GM10248 (cell line): ENCODE measurements at regions of chr1 and their contacts with region 1.

Region 1: DNA sequence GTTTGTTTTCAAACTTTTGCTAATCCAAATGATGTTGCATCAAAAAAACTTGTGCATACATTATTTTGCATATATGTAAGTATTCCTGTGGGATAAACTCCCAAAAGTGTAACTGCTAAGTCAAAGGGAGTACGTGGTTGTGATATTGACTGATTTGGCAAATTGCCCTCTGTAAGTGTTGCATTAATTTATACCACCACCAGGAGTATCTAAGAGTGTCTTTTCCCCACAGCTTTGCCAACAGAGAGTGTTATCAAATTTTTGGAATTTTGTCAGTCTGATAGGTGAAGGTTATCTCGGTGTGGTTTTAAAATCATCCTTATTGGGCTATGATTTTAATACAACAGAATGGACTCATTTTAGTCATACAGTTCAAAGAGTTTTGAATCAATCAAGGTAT is 30.1 kb upstream of the PARP1 start:
- DNase-seq: no peak
- CTCF ChIP-seq: no peak

Region 2: GRCh38 chr1:226424228-226425003 is 13.6 kb before region 1 on chr1:
- CTCF ChIA-PET with region 1: interaction called, 15 read pairs
- POLR2A ChIA-PET with region 1: no interaction called
- DNase-seq: peak; percentile 49
- CTCF ChIP-seq: peak; percentile 44